ENCODE measurements at regions of chr2 and their contacts with region 1.

Region 1: GRCh38 chr2:25521665-25522387 is 151.6 kb downstream of the DTNB start:
- DNase-seq: peak; percentile 56
- H3K4me3 Mint-ChIP-seq: peak overlapping the region; percentile 5
- H3K27ac Mint-ChIP-seq: peak overlapping the region; percentile 65
- H3K4me1 Mint-ChIP-seq: peaks cover 21% of the 10 kb centered on the region
- H3K27me3 Mint-ChIP-seq: no peaks in the 10 kb centered on the region

Region 2: GRCh38 chr2:25309402-25309801 is 212.4 kb before region 1 on chr2:
- intact Hi-C with region 1: loop called (anchors 1 kb)
- DNase-seq: no peak
- H3K4me3 Mint-ChIP-seq: peak overlapping the region; percentile 19
- H3K27ac Mint-ChIP-seq: peak overlapping the region; percentile 18
- H3K4me1 Mint-ChIP-seq: peaks cover 58% of the 10 kb centered on the region
- H3K27me3 Mint-ChIP-seq: no peaks in the 10 kb centered on the region

Region 3: DNA sequence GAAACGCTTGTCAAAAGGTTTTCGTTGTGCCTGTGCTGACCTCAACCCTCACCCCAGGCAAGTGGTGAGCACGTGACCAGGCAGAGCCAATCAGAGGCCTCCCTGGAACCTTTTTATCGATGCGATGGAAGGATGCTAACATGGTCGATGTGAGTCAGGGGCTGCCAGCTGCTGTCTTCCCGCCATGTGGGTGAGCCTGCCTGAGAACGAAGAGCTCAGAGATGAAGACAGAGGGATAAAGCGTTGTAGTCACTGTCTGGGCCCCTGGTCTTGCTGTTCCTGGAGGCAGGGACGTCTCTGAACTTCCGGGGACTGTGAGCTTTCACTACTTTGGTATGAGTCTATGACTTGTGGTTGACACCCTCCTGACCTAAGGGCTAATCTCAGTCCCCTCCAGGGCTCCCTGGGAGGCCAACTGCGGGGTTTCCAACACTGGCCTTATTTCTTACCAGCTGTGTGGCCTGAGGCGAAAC is 198.7 kb before region 1 on chr2:
- intact Hi-C with region 1: no loop called
- DNase-seq: no peak
- H3K4me3 Mint-ChIP-seq: peak overlapping the region; percentile 72
- H3K27ac Mint-ChIP-seq: peak overlapping the region; percentile 94
- H3K4me1 Mint-ChIP-seq: peaks cover 66% of the 10 kb centered on the region
- H3K27me3 Mint-ChIP-seq: no peaks in the 10 kb centered on the region

Region 4: DNA sequence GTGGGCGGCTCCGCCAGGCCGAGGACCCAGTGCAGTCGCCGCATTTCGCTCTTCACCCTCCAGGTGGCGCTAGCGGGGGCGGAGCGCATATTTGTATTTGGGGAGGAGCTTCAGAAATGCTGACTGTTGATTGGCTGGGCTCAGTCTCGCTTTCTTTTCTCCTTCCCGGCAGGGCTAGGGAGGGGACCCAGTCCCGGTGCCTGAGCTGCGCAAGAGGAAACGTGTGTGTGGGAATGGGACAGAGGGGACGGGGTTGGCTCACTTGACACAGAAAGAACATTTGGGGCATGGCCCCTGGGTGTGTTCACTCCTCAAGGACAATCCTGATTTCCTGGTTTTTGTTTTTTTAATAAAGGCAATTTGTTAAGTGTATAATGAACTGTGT is 159.8 kb before region 1 on chr2:
- intact Hi-C with region 1: loop called (anchors 1 kb)
- DNase-seq: peak; percentile 93
- H3K4me3 Mint-ChIP-seq: peak overlapping the region; percentile 84
- H3K27ac Mint-ChIP-seq: peak overlapping the region; percentile 94
- H3K4me1 Mint-ChIP-seq: peaks cover 26% of the 10 kb centered on the region
- H3K27me3 Mint-ChIP-seq: peaks cover 2% of the 10 kb centered on the region

Region 5: GRCh38 chr2:25567406-25567805 is 45.6 kb after region 1 on chr2:
- intact Hi-C with region 1: loop called (anchors 1 kb)
- DNase-seq: no peak
- H3K4me3 Mint-ChIP-seq: no peak overlapping the region
- H3K27ac Mint-ChIP-seq: no peak overlapping the region
- H3K4me1 Mint-ChIP-seq: peaks cover 16% of the 10 kb centered on the region
- H3K27me3 Mint-ChIP-seq: no peaks in the 10 kb centered on the region